ENCODE measurements at regions of chr1 and their contacts with region 1.

Region 1: GRCh38 chr1:222455188-222455879 is 92.6 kb downstream of the HHIPL2 start:
- DNase-seq: peak; percentile 98
- ATAC-seq: peak; percentile 99
- H3K4me3 ChIP-seq: peak overlapping the region; percentile 57
- H3K27ac ChIP-seq: no peak overlapping the region
- H3K4me1 ChIP-seq: peaks cover 7% of the 10 kb centered on the region; the same call in 1 of the 2 replicates
- H3K27me3 ChIP-seq: no peaks in the 10 kb centered on the region
- CTCF ChIP-seq: peak; percentile 99

Region 2: GRCh38 chr1:221263831-221264767 is 1191.2 kb before region 1 on chr1:
- CTCF ChIA-PET with region 1: interaction called, 4 read pairs
- POLR2A ChIA-PET with region 1: no interaction called
- intact Hi-C with region 1: loop called (anchors 2 kb)
- DNase-seq: peak; percentile 84
- ATAC-seq: peak; percentile 87
- H3K4me3 ChIP-seq: no peak overlapping the region
- H3K27ac ChIP-seq: no peak overlapping the region
- H3K4me1 ChIP-seq: no peaks in the 10 kb centered on the region
- H3K27me3 ChIP-seq: no peaks in the 10 kb centered on the region
- CTCF ChIP-seq: peak; percentile 84

Region 3: DNA sequence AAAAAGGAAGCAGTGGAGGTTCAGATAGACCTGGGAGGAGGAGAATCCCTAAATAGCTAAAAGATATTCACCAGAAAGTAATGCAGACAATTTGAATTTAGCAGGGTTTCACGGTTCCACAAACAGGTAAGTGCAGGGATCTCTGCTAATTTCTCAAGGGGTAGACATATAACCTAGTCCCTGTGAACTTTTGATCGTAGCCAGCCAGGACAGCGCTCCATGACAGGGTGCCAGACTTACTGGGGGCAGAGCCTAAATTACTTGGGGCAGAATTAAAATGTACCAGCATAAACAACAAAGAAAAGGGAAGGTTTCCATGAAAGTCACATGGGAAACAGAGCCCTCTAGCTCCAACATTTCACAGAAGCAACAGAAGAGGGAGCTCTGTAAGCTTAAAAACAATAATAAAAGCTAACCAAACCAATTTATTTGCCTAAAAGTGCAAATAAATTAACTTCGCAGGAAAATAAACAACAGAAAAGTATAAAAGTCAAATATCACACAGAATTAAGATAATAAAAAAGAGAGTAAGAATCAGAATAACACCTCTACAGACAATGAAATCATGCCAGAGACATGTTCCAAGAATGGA is 911.7 kb before region 1 on chr1:
- CTCF ChIA-PET with region 1: interaction called, 3 read pairs
- POLR2A ChIA-PET with region 1: no interaction called
- intact Hi-C with region 1: loop called (anchors 10 kb)
- DNase-seq: peak; percentile 60
- ATAC-seq: peak; percentile 48; the same call in 1 of the 2 replicates
- H3K4me3 ChIP-seq: no peak overlapping the region
- H3K27ac ChIP-seq: no peak overlapping the region
- H3K4me1 ChIP-seq: peaks cover 5% of the 10 kb centered on the region; the same call in 1 of the 2 replicates
- H3K27me3 ChIP-seq: no peaks in the 10 kb centered on the region
- CTCF ChIP-seq: peak; percentile 87

Region 4: GRCh38 chr1:221886743-221887413 is 568.5 kb before region 1 on chr1:
- CTCF ChIA-PET with region 1: interaction called, 4 read pairs
- POLR2A ChIA-PET with region 1: interaction called, 3 read pairs
- intact Hi-C with region 1: loop called (anchors 2 kb)
- DNase-seq: peak; percentile 100
- ATAC-seq: peak; percentile 96
- H3K4me3 ChIP-seq: peak overlapping the region; percentile 38
- H3K27ac ChIP-seq: peak overlapping the region; percentile 72
- H3K4me1 ChIP-seq: peaks cover 33% of the 10 kb centered on the region
- H3K27me3 ChIP-seq: no peaks in the 10 kb centered on the region
- CTCF ChIP-seq: peak; percentile 49

Region 5: DNA sequence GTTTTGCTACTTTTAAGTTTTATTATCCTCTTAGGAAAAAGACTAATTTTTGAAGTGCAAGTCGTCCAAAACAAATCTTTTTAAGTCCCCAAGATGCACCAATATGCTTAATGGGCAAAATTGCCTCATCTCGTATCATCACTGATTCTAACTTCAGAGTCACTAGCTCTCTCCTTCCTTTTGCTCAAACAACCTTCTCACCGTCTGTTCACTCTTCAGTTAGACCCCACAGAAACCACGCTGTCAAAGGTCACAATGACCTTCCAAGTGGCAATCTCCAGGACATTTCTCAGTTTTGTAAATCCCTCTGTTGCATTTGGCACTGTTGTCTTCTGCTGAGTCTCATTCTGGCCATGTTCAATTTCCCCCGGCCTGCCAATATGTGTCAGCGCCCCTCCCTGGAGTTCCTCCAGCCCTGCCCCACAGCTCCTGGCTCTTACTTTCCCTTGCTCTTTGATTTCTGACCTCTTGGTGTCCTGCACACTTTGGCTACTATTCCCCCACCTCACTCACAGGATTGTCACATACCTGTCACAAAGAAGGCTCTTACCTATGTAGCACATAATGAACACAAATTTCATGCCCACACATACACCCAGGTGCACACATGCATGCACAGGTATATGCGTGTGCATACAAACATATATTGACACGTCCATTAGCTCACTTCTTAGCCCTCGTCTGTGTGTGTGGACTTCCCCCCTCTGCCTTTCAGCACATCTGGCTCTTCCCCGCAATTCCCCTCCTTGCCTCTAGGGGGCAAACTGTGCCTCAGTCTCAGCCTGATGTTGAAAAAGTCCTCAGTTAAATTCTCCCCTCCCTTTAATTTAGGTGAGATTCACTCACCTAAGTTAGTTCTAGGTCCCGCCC is 359.5 kb before region 1 on chr1:
- CTCF ChIA-PET with region 1: interaction called, 4 read pairs
- POLR2A ChIA-PET with region 1: no interaction called
- intact Hi-C with region 1: loop called (anchors 1 kb)
- DNase-seq: peak; percentile 77
- ATAC-seq: peak; percentile 71
- H3K4me3 ChIP-seq: no peak overlapping the region
- H3K27ac ChIP-seq: no peak overlapping the region
- H3K4me1 ChIP-seq: peaks cover 5% of the 10 kb centered on the region; the same call in 1 of the 2 replicates
- H3K27me3 ChIP-seq: no peaks in the 10 kb centered on the region
- CTCF ChIP-seq: peak; percentile 98

Region 6: GRCh38 chr1:222171005-222171404 is 284.3 kb before region 1 on chr1:
- CTCF ChIA-PET with region 1: interaction called, 8 read pairs
- POLR2A ChIA-PET with region 1: no interaction called
- intact Hi-C with region 1: loop called (anchors 1 kb)
- DNase-seq: peak; percentile 77
- ATAC-seq: peak; percentile 71
- H3K4me3 ChIP-seq: no peak overlapping the region
- H3K27ac ChIP-seq: no peak overlapping the region
- H3K4me1 ChIP-seq: no peaks in the 10 kb centered on the region
- H3K27me3 ChIP-seq: no peaks in the 10 kb centered on the region
- CTCF ChIP-seq: peak; percentile 90

Region 7: GRCh38 chr1:222465211-222466041 is 10.1 kb after region 1 on chr1:
- CTCF ChIA-PET with region 1: interaction called, 14 read pairs
- POLR2A ChIA-PET with region 1: no interaction called
- intact Hi-C with region 1: no loop called
- DNase-seq: peak; percentile 100
- ATAC-seq: peak; percentile 99
- H3K4me3 ChIP-seq: peak overlapping the region; percentile 70
- H3K27ac ChIP-seq: peak overlapping the region; percentile 83
- H3K4me1 ChIP-seq: peaks cover 7% of the 10 kb centered on the region; the same call in 1 of the 2 replicates
- H3K27me3 ChIP-seq: no peaks in the 10 kb centered on the region
- CTCF ChIP-seq: peak; percentile 100

Measured in PC-3 (cell line).